ENCODE measurements at regions of chr7 and their contacts with region 1.

Region 1: DNA sequence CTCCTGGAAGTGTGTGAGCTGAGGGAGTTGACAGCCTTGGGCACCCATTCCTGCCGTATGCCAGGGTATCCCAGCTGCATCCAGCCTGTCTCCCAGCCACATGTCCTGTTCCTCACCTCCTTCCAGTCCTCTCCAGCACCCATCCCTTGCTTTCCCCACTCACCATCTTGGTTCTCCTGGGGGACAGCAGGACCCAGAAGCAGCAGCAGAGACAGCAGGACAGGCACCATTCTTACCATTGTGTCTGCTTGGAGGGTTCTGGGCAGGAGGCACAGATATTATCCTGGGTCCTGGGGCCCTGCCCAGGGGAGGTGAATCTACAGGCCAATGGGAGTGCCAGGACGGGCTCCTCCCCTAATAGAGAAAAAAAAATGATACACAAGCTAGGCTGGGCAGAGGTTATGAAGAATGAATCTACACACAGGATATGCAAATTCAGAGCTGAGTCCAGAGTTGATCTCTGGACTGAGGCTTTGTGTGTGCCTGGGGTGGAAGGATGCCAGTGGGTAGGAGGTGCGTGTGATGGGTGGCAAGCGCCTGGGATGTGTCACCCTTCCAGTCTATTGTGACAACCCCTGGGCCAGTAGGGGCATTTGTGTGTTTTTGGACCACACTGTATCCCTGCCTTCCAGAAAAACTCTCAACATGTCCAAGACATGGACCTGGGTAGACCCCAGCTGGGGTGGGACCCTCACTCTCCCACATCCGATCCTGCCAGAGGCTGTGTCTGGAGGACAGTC is at the start of gene AZGP1:
- DNase-seq: no peak
- ATAC-seq: no peak
- H3K4me3 ChIP-seq: no peak within 1 kb of the TSS
- H3K4me3 Mint-ChIP-seq: no peak within 1 kb of the TSS
- H3K27ac ChIP-seq: no peak within 1 kb of the TSS
- H3K27ac Mint-ChIP-seq: no peak within 1 kb of the TSS
- H3K4me1 ChIP-seq: peaks cover 6% of the 10 kb centered on the region
- H3K4me1 Mint-ChIP-seq: peaks cover 9% of the 10 kb centered on the region
- H3K27me3 ChIP-seq: peaks cover 4 to 6% of the 10 kb centered on the region in 2 experiments
- H3K27me3 Mint-ChIP-seq: peaks cover 23% of the 10 kb centered on the region
- CTCF ChIP-seq: no peak
- total RNA-seq, gene AZGP1: not detected

Region 2: GRCh38 chr7:100049441-100050311 is 73.7 kb after region 1 on chr7 and contains the start of gene ZSCAN21:
- CTCF ChIA-PET with region 1: interaction called, 4 read pairs
- POLR2A ChIA-PET with region 1: no interaction called
- intact Hi-C with region 1: loop called in 1 of 2 experiments (anchors 5 kb)
- DNase-seq: peak; percentile 59 to 89 (median 74)
- ATAC-seq: peak; percentile 88
- H3K4me3 ChIP-seq: peak within 1 kb of the TSS; percentile 97
- H3K4me3 Mint-ChIP-seq: peak within 1 kb of the TSS; percentile 95
- H3K27ac ChIP-seq: peak within 1 kb of the TSS; percentile 77 to 88
- H3K27ac Mint-ChIP-seq: peak within 1 kb of the TSS; percentile 96
- H3K4me1 ChIP-seq: peaks cover 18% of the 10 kb centered on the region
- H3K4me1 Mint-ChIP-seq: peaks cover 25% of the 10 kb centered on the region
- H3K27me3 ChIP-seq: no peaks in the 10 kb centered on the region
- H3K27me3 Mint-ChIP-seq: no peaks in the 10 kb centered on the region
- CTCF ChIP-seq: peak; percentile 20
- total RNA-seq, gene ZSCAN21: 2.0 to 2.7 TPM

Region 3: DNA sequence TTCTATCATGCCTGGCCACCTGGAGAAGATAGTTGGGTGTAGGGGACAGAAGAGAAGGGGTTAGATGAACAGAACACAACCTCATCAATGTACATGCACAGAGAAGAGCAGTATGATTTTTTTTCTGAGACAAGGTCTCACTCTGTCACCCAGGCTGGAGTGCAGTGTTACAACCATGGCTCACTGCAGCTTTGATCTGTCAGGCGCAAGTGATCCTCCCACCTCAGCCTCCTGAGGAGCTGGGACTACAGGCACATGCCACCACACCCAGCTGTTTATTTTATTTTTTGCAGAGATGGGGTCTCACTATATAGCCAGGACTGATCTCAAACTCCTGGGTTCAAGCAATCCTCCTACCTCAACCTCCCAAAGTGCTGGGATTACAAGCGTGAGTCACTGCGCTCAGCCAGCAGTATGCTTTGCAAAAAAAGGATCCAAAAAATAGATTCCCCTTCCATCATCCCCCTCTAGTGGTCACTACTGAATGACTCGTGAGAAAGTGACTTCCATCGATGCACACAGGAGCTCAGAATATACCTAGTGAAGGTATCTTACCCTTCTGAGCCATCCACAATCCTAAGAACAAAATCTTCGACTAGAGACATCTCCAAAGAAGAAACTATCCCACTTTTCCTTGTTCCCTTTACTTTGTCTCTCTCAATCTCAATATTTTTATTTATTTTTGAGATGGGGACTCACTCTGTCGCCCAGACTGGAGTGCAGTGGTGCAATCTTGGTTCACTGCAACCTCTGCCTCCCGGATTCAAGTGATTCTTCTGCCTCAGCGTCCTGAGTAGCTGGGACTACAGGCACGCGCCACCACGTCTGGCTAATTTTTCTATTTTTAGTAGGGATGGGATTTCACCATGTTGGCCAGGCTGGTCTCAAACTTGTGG is 431.6 kb after region 1 on chr7:
- CTCF ChIA-PET with region 1: no interaction called
- POLR2A ChIA-PET with region 1: no interaction called
- intact Hi-C with region 1: loop called in 1 of 2 experiments (anchors 5 kb)
- DNase-seq: peak in 9 of 14 experiments; percentile 11 to 81 (median 31)
- ATAC-seq: peak; percentile 93
- H3K4me3 ChIP-seq: no peak overlapping the region
- H3K4me3 Mint-ChIP-seq: no peak overlapping the region
- H3K27ac ChIP-seq: no peak overlapping the region
- H3K27ac Mint-ChIP-seq: no peak overlapping the region
- H3K4me1 ChIP-seq: peaks cover 5% of the 10 kb centered on the region
- H3K4me1 Mint-ChIP-seq: peaks cover 3% of the 10 kb centered on the region
- H3K27me3 ChIP-seq: no peaks in the 10 kb centered on the region
- H3K27me3 Mint-ChIP-seq: no peaks in the 10 kb centered on the region
- CTCF ChIP-seq: peak; percentile 67